Heart right ventricle (tissue), 16 donors: ENCODE measurements at regions of chr20 and their contacts with region 1.

Region 1: DNA sequence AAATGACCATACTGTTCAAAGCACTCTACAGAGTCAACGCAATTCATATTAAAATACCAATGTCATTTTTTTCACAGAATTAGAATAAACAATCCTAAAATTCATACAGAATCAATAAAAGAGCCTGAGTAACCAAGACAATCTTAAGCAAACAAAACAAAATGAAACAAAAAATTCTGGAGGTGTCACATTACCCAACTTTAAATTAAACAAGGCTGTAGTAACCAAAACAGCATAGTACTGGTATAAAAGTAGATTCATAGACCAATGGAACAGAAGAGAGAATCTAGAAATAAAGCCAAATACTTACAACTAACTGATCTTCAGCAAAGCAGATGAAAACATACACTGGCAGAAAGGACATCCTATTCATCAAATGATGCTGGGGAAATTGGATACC is 346.9 kb upstream of the JAG1 start:
- DNase-seq: no peak
- ATAC-seq: no peak
- H3K4me3 ChIP-seq: no peak overlapping the region
- H3K27ac ChIP-seq: no peak overlapping the region
- H3K4me1 ChIP-seq: no peaks in the 10 kb centered on the region
- H3K27me3 ChIP-seq: no peaks in the 10 kb centered on the region
- CTCF ChIP-seq: no peak

Region 2: DNA sequence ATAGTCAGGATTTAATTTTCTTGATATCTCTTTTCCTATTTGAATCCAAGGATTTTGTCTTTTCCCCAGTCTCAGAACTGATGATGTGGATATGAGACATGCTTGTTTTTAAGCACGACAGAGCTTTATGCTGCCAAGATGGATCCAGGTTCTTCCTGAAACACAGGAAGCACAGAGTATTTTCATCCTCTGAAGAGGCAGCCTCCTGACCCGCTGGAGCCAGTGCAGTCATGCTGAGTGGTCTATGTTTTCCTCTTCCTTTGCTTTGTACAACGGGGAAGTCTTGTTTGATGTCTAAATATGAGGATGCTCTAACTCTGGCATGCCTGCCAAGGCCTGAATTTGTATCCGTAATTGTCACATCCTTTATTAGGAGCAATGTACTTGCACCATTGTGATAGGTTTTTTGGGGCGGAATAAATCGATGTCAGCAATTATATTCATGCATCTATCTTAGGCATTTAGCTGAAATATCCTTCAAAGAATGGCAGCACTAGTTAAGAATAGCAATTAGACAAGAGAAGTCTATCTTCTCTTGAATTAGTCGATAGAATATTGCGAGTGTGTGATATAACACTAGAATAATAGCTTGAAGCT is 60.2 kb after region 1 on chr20:
- intact Hi-C with region 1: loop called in 1 of 10 experiments (anchors 10 kb)
- DNase-seq: peak in 1 of 2 donors; percentile 11
- ATAC-seq: peak in 7 of 8 donors; percentile 17 to 88 (median 58)
- H3K4me3 ChIP-seq: no peak overlapping the region
- H3K27ac ChIP-seq: peak overlapping the region in 3 of 10 donors; percentile 25 to 62 (median 46)
- H3K4me1 ChIP-seq: peaks cover 0 to 17% (median 7%) of the 10 kb centered on the region in 9 donors
- H3K27me3 ChIP-seq: no peaks in the 10 kb centered on the region
- CTCF ChIP-seq: no peak